ENCODE measurements at regions of chr4 and their contacts with region 1.

Region 1: DNA sequence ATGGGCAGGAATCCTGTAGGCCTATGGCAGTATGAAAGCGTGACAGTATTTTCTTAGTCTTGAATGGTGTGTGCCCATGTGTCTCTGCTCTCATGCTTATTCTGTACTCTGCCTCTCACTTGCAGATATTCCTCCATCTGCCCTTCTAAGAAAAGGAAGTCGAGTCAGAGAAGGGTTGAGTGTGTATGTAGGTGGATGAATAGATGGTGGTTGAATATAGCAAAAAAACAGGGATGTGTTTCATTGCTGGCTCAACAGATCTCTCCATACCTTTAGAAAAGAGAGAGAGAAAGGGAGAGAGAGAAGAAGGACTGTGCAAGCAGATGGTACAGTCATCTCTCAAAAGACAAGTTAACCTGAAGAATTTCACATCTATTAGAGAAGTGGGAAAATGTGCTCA is 381.5 kb downstream of the FBXW7 start:
- DNase-seq: no peak
- ATAC-seq: no peak
- H3K4me3 ChIP-seq: no peak overlapping the region
- H3K27ac ChIP-seq: no peak overlapping the region
- H3K4me1 ChIP-seq: no peaks in the 10 kb centered on the region
- H3K27me3 ChIP-seq: no peaks in the 10 kb centered on the region
- CTCF ChIP-seq: no peak

Region 2: DNA sequence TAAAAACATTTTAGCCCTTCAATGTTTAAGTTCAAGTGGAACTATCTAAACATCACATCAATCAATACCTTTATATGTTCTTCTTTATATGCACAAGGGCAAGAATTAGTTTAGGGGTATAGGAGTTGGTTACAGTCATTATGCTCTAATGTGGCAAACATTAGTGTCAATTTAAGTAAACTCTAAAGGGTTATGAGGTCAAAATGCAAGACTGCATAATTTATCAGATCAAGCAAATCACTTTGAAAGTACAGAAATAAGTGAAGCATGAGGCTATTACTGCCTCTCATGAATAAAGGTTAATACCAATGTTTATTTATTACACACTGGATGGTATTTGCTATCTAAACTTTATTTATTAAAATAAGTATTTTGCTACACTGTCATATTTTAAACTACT is 1512.8 kb before region 1 on chr4:
- intact Hi-C with region 1: loop called in 1 of 2 experiments (anchors 5 kb)
- DNase-seq: no peak
- ATAC-seq: no peak
- H3K4me3 ChIP-seq: no peak overlapping the region
- H3K27ac ChIP-seq: no peak overlapping the region
- H3K4me1 ChIP-seq: no peaks in the 10 kb centered on the region
- H3K27me3 ChIP-seq: no peaks in the 10 kb centered on the region
- CTCF ChIP-seq: no peak